CD4-positive, alpha-beta memory T cell (primary cell): ENCODE measurements at regions of chr6 and their contacts with region 1.

Region 1: DNA sequence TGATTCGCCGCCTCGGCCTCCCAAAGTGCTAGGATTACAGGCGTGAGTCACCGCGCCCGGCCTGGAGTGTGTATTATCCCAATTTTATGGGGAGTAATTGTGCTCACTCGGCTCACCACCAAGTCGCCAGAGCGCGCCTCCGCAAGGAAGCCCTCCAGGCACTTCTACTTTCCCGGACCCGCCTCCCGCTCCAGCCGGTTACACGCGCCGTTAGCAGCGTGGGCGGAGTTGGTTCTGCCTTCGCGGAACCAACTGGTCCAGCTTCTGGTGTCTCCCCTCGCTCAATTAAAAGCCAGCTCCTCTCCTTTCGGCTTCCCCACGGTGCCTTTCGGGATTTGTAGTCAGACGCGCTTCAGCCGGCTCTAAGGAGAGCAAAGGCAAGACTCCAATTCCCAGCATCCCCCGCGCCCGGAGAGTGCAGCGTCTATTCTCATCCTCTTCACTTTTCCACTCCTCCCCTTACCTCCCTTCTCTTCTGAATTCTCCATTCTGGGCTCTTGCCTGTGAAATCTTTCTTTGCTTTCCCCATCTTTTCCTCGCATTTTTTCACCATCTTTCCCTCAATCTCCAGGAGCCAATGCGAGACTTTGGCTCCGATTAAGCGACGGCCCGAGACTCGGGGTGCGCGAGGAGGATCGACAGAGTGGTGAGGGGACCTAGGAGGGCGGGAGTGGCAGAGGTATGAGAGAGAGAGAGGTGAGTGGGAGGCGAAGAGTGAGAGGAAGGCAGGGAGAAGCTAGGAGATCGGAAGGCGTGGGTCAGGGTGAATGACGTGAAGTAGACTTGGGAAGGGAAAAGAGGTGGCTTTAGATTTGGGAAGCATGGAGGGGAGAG is at the start of gene GTF2H4:
- DNase-seq: peak; percentile 90 to 97 (median 93)
- H3K4me3 ChIP-seq: peak within 1 kb of the TSS; percentile 75 to 97
- H3K4me3 Mint-ChIP-seq: peak within 1 kb of the TSS; percentile 96 to 100 (median 99)
- H3K27ac ChIP-seq: peak within 1 kb of the TSS; percentile 50
- H3K27ac Mint-ChIP-seq: peak within 1 kb of the TSS; percentile 36 to 96 (median 90)
- H3K4me1 ChIP-seq: peaks cover 14% of the 10 kb centered on the region
- H3K4me1 Mint-ChIP-seq: peaks cover 20 to 32% (median 23%) of the 10 kb centered on the region in 4 donors
- H3K27me3 ChIP-seq: no peaks in the 10 kb centered on the region
- H3K27me3 Mint-ChIP-seq: no peaks in the 10 kb centered on the region
- total RNA-seq, gene GTF2H4: 36.5 to 39.7 TPM

Region 2: GRCh38 chr6:30717042-30717844 is 190.7 kb before region 1 on chr6 and contains the start of gene MDC1:
- CTCF ChIA-PET with region 1: no interaction called
- POLR2A ChIA-PET with region 1: no interaction called
- intact Hi-C with region 1: no loop called
- DNase-seq: peak; percentile 99 to 100 (median 100)
- H3K4me3 ChIP-seq: peak within 1 kb of the TSS; percentile 67 to 80
- H3K4me3 Mint-ChIP-seq: peak within 1 kb of the TSS; percentile 88 to 99 (median 98)
- H3K27ac ChIP-seq: peak within 1 kb of the TSS; percentile 69
- H3K27ac Mint-ChIP-seq: peak within 1 kb of the TSS; percentile 96 to 100 (median 98)
- H3K4me1 ChIP-seq: peaks cover 40% of the 10 kb centered on the region
- H3K4me1 Mint-ChIP-seq: peaks cover 22 to 70% (median 44%) of the 10 kb centered on the region in 4 donors
- H3K27me3 ChIP-seq: no peaks in the 10 kb centered on the region
- H3K27me3 Mint-ChIP-seq: no peaks in the 10 kb centered on the region
- total RNA-seq, gene MDC1: 60.7 to 73.5 TPM

Region 3: GRCh38 chr6:30955367-30956042 is 47.5 kb after region 1 on chr6:
- CTCF ChIA-PET with region 1: interaction called, 3 read pairs
- POLR2A ChIA-PET with region 1: interaction called, 17 read pairs
- intact Hi-C with region 1: no loop called
- DNase-seq: peak; percentile 54 to 71 (median 70)
- H3K4me3 ChIP-seq: peak overlapping the region; percentile 31 to 53
- H3K4me3 Mint-ChIP-seq: peak overlapping the region; percentile 84 to 91 (median 86)
- H3K27ac ChIP-seq: peak overlapping the region; percentile 29
- H3K27ac Mint-ChIP-seq: peak overlapping the region; percentile 46 to 91 (median 89)
- H3K4me1 ChIP-seq: peaks cover 20% of the 10 kb centered on the region
- H3K4me1 Mint-ChIP-seq: peaks cover 7 to 26% (median 19%) of the 10 kb centered on the region in 4 donors
- H3K27me3 ChIP-seq: no peaks in the 10 kb centered on the region
- H3K27me3 Mint-ChIP-seq: peaks cover 9 to 11% of the 10 kb centered on the region in 2 donors